Activated naive CD4-positive, alpha-beta T cell treated with anti-CD3 and anti-CD28 coated beads for 36 hours (primary cell): ENCODE measurements at regions of chr11 and their contacts with region 1.

Region 1: DNA sequence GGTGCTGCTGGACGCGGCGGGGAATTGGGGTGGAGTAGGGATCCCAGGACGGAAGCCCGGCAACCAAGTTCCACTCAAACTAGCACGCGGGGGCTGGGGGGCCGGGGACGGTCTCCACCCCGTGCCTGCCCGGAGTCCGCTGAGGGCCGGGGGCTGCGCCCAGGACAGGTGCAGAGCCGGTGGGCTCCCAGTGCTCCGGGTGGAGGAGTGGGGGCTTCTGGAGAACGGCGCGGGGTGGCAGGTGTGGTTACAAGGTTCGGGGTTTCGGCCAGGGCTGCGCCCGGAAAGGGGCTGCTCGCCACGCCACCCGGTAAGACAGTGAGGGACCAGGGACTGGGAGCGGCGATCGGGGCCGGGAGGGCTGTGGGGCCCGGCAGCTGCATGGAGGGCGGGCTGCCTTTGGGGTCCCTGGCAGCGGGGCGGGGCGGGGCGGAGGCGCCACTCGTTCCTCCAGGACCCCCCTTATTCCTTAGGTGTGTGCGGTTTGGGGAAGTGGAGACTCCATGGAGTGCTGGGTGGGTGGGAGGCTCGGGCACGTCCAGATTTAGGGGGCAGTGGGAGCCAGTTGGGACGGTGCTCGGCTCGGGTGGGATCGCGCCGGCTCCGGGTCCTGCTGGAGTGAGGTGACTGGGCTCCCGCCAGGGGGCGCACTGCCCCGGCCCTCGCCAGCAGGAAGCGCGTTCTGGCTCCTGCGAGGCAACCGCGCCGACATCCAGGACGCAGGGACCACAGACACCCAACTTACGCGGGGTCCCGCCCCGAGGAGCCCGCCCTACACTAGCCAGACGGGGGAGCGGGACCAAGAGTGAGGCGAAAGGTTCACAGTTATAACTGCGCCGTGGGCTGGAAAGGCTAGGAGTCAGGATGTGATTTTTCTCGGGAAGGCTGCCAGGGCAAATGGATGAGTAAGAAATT is 868 bp downstream of the TSPAN18 start:
- DNase-seq: peak; percentile 82
- H3K4me3 Mint-ChIP-seq: peak overlapping the region; percentile 82
- H3K27ac Mint-ChIP-seq: peak overlapping the region; percentile 72
- H3K4me1 Mint-ChIP-seq: peaks cover 51% of the 10 kb centered on the region
- H3K27me3 Mint-ChIP-seq: no peaks in the 10 kb centered on the region

Region 2: GRCh38 chr11:44445500-44446365 is 281.9 kb before region 1 on chr11:
- CTCF ChIA-PET with region 1: no interaction called
- intact Hi-C with region 1: no loop called
- DNase-seq: no peak
- H3K4me3 Mint-ChIP-seq: no peak overlapping the region
- H3K27ac Mint-ChIP-seq: no peak overlapping the region
- H3K4me1 Mint-ChIP-seq: no peaks in the 10 kb centered on the region
- H3K27me3 Mint-ChIP-seq: peaks cover 2% of the 10 kb centered on the region

Region 3: DNA sequence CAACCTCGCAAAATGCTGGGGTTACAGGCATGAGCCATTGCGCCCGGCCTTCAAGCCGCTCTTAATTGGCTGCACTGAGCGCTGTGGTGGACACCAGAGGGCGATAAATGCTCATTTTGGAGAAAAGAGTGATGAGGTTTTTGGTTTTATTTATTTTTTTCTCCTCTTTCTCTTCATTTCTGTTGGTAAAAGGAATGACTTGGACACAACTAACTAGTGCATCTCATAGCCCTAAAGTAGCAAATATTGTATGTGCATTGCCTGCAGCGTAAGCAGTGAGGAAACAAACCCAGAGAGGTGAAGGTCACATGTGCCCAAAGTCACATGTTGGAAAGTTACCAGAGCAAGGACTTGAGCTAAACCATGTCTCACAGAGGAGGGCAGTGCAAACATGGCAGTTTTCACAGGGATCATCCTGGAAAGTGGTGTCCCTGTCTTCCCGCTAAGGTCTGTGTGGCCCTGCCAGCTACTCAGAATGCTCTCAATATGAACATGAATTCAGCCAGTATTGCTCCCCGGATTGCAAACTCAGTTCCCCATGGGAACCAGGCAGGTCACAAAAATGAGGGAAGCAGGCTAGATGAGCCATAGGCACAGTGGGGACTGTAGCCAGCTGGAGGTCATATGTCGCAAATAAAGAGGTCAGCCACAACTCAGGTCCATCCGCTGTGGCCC is 170.8 kb before region 1 on chr11:
- CTCF ChIA-PET with region 1: interaction called, 5 read pairs
- intact Hi-C with region 1: loop called (anchors 2 kb)
- DNase-seq: peak; percentile 85
- H3K4me3 Mint-ChIP-seq: no peak overlapping the region
- H3K27ac Mint-ChIP-seq: peak overlapping the region; percentile 83
- H3K4me1 Mint-ChIP-seq: peaks cover 25% of the 10 kb centered on the region
- H3K27me3 Mint-ChIP-seq: no peaks in the 10 kb centered on the region

Region 4: DNA sequence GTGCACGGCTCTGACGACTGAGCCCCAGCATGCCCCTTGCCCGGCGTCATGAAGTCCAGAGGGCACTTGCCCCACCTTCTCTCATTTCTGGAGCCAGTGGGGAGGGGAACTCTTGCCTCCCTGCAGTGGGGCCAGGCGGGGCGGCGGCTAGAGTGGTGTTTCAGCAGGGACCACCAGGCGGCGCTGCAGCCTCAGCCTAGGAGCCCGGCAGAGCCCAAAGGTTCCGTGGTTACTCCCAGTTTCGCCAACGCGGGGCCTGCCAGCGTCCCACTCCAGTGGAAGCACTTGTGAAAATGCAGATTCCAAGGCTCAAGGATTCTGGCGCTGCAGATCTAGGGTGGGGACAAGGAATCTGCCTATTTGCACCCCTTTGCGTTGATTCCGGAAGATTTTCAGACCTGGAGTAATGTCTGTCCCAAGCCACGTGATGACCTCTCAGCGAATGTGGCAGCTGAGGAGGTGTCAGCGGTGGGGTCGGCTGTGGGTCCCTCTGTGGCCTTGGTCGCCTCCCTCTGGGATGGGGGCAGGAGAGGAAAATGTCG is 106.4 kb before region 1 on chr11:
- CTCF ChIA-PET with region 1: no interaction called
- intact Hi-C with region 1: loop called (anchors 2 kb)
- DNase-seq: peak; percentile 68
- H3K4me3 Mint-ChIP-seq: no peak overlapping the region
- H3K27ac Mint-ChIP-seq: no peak overlapping the region
- H3K4me1 Mint-ChIP-seq: peaks cover 39% of the 10 kb centered on the region
- H3K27me3 Mint-ChIP-seq: no peaks in the 10 kb centered on the region

Region 5: GRCh38 chr11:44747316-44747715 is 19.7 kb after region 1 on chr11:
- CTCF ChIA-PET with region 1: interaction called, 3 read pairs
- intact Hi-C with region 1: loop called (anchors 2 kb)
- DNase-seq: peak; percentile 20
- H3K4me3 Mint-ChIP-seq: no peak overlapping the region
- H3K27ac Mint-ChIP-seq: peak overlapping the region; percentile 62
- H3K4me1 Mint-ChIP-seq: peaks cover 50% of the 10 kb centered on the region
- H3K27me3 Mint-ChIP-seq: no peaks in the 10 kb centered on the region

Region 6: GRCh38 chr11:44855493-44855849 is 127.8 kb after region 1 on chr11:
- CTCF ChIA-PET with region 1: no interaction called
- intact Hi-C with region 1: loop called (anchors 2 kb)
- DNase-seq: peak; percentile 50
- H3K4me3 Mint-ChIP-seq: no peak overlapping the region
- H3K27ac Mint-ChIP-seq: no peak overlapping the region
- H3K4me1 Mint-ChIP-seq: peaks cover 23% of the 10 kb centered on the region
- H3K27me3 Mint-ChIP-seq: no peaks in the 10 kb centered on the region

Region 7: DNA sequence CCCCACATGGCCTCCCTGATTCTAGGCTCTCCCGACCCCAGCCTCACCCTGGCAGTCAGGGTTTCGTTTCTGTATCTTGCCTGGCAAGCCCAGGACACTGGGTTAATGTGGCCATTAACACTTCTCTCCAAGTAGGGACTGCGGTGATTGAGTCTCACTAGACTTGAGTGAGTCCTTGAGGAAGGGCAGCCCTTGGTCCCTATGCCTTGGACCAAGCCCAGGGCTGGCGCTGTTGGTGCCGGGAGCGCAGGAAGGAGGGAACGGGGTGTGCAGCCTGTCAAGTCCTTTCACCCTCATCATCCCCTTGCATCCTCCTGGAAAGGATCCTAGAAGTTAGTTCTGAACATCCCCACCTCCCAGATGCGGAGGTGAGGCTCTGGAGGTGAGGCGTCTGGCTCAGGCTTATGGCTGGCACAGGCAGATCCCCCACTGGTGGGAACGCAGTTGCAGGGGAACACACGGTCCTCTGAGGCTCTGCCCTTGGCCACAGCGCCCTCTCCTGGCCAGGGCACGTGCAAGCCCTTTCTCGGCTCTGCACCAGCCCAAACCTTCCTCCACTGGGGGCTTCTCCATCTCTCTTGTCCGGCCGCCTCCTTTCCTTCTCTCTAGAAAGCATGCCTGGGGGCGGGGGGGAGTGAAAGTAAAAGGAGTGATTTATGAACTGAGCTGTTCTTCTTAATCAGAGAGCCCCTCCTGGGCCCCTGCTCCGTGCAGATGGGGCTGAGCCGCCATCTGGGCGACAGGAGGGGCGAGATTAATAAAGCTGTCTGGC is 166.4 kb after region 1 on chr11:
- CTCF ChIA-PET with region 1: interaction called, 3 read pairs
- intact Hi-C with region 1: loop called (anchors 1 kb)
- DNase-seq: peak; percentile 73
- H3K4me3 Mint-ChIP-seq: no peak overlapping the region
- H3K27ac Mint-ChIP-seq: no peak overlapping the region
- H3K4me1 Mint-ChIP-seq: no peaks in the 10 kb centered on the region
- H3K27me3 Mint-ChIP-seq: no peaks in the 10 kb centered on the region

Region 8: GRCh38 chr11:45102810-45103621 is 375.4 kb after region 1 on chr11:
- CTCF ChIA-PET with region 1: no interaction called
- intact Hi-C with region 1: loop called (anchors 5 kb)
- DNase-seq: peak; percentile 85
- H3K4me3 Mint-ChIP-seq: peak overlapping the region; percentile 41
- H3K27ac Mint-ChIP-seq: peak overlapping the region; percentile 18
- H3K4me1 Mint-ChIP-seq: peaks cover 12% of the 10 kb centered on the region
- H3K27me3 Mint-ChIP-seq: peaks cover 12% of the 10 kb centered on the region

Region 9: GRCh38 chr11:45834298-45834756 is 1106.7 kb after region 1 on chr11:
- CTCF ChIA-PET with region 1: no interaction called
- intact Hi-C with region 1: no loop called
- DNase-seq: no peak
- H3K4me3 Mint-ChIP-seq: no peak overlapping the region
- H3K27ac Mint-ChIP-seq: peak overlapping the region; percentile 20
- H3K4me1 Mint-ChIP-seq: peaks cover 11% of the 10 kb centered on the region
- H3K27me3 Mint-ChIP-seq: no peaks in the 10 kb centered on the region